Activated CD4-positive, alpha-beta memory T cell treated with anti-CD3 and anti-CD28 coated beads for 36 hours (primary cell): ENCODE measurements at regions of chr13 and their contacts with region 1.

Region 1: GRCh38 chr13:40221460-40222201 is 444.8 kb downstream of the FOXO1 start:
- DNase-seq: peak; percentile 54
- H3K4me3 Mint-ChIP-seq: peak overlapping the region; percentile 30
- H3K27ac Mint-ChIP-seq: peak overlapping the region; percentile 74
- H3K4me1 Mint-ChIP-seq: peaks cover 63% of the 10 kb centered on the region
- H3K27me3 Mint-ChIP-seq: no peaks in the 10 kb centered on the region

Region 2: GRCh38 chr13:39952249-39953233 is 269.1 kb before region 1 on chr13:
- CTCF ChIA-PET with region 1: no interaction called
- POLR2A ChIA-PET with region 1: no interaction called
- intact Hi-C with region 1: loop called (anchors 5 kb)
- DNase-seq: no peak
- H3K4me3 Mint-ChIP-seq: no peak overlapping the region
- H3K27ac Mint-ChIP-seq: no peak overlapping the region
- H3K4me1 Mint-ChIP-seq: peaks cover 44% of the 10 kb centered on the region
- H3K27me3 Mint-ChIP-seq: no peaks in the 10 kb centered on the region

Region 3: DNA sequence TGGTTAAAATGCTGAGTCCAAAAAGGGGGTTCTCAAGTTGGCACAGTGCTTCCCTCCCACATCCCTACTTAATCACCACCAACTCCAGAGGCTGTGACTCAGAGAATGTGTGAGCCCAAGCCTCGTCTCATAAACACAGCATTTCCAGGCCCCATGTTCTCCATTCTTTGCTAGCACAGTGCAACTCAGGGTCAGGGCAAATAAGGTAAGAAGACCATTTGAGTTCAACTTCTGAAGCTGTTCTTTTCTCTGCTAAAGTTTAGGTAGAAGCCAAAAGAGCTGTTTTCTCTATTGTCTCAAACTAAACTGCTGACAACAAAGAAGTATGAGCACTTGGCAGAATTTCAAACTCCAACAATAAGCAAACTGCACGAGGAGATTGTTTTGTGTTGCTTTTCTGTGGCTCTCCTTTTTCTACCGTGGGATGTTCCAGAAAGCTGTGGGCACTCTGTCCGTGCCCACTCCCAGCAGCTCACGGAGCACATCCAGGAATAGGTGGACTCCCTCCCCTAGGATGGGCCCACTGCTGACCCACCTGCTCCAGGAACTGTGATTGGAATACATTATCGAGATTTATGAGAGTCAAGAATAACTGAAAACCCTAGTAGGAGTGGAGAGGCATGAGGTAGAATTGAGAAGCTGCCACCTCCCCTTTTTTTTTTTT is 71.9 kb before region 1 on chr13:
- CTCF ChIA-PET with region 1: no interaction called
- POLR2A ChIA-PET with region 1: no interaction called
- intact Hi-C with region 1: loop called (anchors 2 kb)
- DNase-seq: no peak
- H3K4me3 Mint-ChIP-seq: no peak overlapping the region
- H3K27ac Mint-ChIP-seq: peak overlapping the region; percentile 18
- H3K4me1 Mint-ChIP-seq: peaks cover 62% of the 10 kb centered on the region
- H3K27me3 Mint-ChIP-seq: no peaks in the 10 kb centered on the region

Region 4: GRCh38 chr13:40251343-40252032 is 29.9 kb after region 1 on chr13:
- CTCF ChIA-PET with region 1: no interaction called
- POLR2A ChIA-PET with region 1: no interaction called
- intact Hi-C with region 1: loop called (anchors 1 kb)
- DNase-seq: peak; percentile 13
- H3K4me3 Mint-ChIP-seq: no peak overlapping the region
- H3K27ac Mint-ChIP-seq: peak overlapping the region; percentile 70
- H3K4me1 Mint-ChIP-seq: peaks cover 42% of the 10 kb centered on the region
- H3K27me3 Mint-ChIP-seq: no peaks in the 10 kb centered on the region

Region 5: DNA sequence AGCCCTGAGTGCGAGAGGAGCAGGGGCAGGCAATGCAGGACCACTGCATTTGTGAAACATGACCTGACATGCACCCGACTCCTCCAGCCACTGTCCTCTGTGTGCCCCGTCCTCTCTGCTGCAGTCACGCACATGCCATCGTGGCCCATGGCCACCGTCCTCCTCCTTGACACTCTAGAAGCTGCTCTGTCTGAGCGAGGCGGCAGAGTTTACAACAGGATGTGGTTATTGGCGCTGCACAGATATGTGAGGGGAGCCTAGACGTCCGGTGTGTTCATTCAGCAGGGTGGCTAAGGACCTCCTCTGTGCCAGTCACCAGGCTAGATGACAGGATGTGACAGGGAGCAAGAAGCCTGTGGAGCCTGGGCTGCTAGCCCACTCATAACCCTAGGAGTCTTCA is 167.0 kb after region 1 on chr13:
- CTCF ChIA-PET with region 1: no interaction called
- POLR2A ChIA-PET with region 1: interaction called, 4 read pairs
- intact Hi-C with region 1: loop called (anchors 5 kb)
- DNase-seq: peak; percentile 92
- H3K4me3 Mint-ChIP-seq: peak overlapping the region; percentile 68
- H3K27ac Mint-ChIP-seq: peak overlapping the region; percentile 94
- H3K4me1 Mint-ChIP-seq: peaks cover 29% of the 10 kb centered on the region
- H3K27me3 Mint-ChIP-seq: no peaks in the 10 kb centered on the region